OCI-LY7 (cell line): ENCODE measurements at regions of chr18 and their contacts with region 1.

Region 1: GRCh38 chr18:8747440-8747937 is 42.1 kb downstream of the MTCL1 start:
- DNase-seq: no peak
- H3K4me3 ChIP-seq: no peak overlapping the region
- H3K27ac ChIP-seq: peak overlapping the region; percentile 99
- H3K4me1 ChIP-seq: peaks cover 94% of the 10 kb centered on the region
- CTCF ChIP-seq: no peak

Region 2: GRCh38 chr18:8696749-8697211 is 50.7 kb before region 1 on chr18:
- CTCF ChIA-PET with region 1: no interaction called
- POLR2A ChIA-PET with region 1: interaction called, 3 read pairs
- intact Hi-C with region 1: loop called (anchors 2 kb)
- DNase-seq: peak; percentile 75
- H3K4me3 ChIP-seq: peak overlapping the region; percentile 28
- H3K27ac ChIP-seq: peak overlapping the region; percentile 79
- H3K4me1 ChIP-seq: peaks cover 23% of the 10 kb centered on the region
- CTCF ChIP-seq: peak; percentile 97

Region 3: DNA sequence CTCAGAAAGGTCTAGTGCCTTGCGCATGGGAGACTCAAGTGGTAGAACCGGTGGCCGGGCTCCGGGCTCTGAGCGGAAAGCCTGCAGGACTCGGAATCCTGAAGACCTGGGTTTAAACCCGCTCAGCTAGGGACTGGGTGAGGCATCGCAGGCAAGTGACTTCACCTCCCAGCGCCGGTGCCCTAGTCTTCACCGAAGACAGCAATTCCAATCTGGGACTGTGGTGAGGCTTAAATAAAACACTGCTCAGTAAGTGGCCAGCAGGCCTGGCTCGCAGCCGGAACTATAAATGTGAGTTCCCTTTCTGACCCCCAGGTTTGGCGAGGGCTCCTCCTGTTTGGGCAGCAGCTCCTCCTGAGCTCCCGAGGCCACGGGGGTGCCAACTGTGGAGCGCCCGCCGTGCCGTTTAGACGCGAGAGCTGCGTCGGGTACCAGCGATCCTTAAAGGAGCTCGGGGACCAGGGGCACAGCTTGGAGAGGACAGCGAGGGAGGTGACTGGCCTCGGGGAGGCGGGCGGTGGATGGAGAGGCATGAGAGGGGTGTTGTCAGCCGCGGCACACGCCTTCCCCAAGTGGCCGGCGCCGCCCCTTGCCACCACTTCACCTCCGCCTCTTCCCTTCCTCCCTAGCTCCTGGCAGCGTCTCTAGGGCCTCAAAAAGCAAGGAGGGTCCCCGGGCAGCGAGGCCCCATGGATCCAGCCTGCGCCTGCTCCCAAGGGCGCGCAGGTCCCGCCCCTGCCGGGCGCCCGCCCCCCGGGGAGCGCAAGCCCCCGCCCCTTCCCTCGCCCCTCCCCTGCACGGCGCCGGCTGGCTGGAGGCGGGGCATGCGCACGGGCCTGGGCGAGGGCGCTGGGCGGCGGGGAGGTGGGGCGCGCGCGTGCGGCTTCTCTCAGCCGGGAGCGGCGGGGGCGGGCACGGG is 42.9 kb before region 1 on chr18:
- CTCF ChIA-PET with region 1: interaction called, 4 read pairs
- POLR2A ChIA-PET with region 1: interaction called, 19 read pairs
- intact Hi-C with region 1: loop called (anchors 1 kb)
- DNase-seq: peak; percentile 91
- H3K4me3 ChIP-seq: peak overlapping the region; percentile 67
- H3K27ac ChIP-seq: no peak overlapping the region
- H3K4me1 ChIP-seq: peaks cover 24% of the 10 kb centered on the region
- CTCF ChIP-seq: no peak

Region 4: GRCh38 chr18:8730080-8730827 is 17.2 kb before region 1 on chr18:
- CTCF ChIA-PET with region 1: no interaction called
- POLR2A ChIA-PET with region 1: interaction called, 53 read pairs
- intact Hi-C with region 1: loop called (anchors 2 kb)
- DNase-seq: no peak
- H3K4me3 ChIP-seq: no peak overlapping the region
- H3K27ac ChIP-seq: no peak overlapping the region
- H3K4me1 ChIP-seq: peaks cover 41% of the 10 kb centered on the region
- CTCF ChIP-seq: no peak

Region 5: DNA sequence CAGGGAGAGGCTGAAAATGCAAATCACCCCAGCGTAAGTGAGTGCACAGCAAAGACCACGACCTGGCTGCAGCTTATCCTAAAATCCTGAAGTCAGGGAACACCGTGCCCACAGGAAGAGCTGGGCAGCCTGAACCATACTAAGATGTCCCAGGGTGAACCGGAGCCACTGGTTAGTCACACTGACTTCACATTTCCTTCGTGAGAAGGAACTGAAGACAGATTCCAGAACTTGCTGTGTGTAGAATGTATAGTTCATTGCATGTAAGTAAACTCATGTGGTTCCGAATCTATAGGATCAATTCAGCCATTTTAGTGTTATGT is 270.4 kb after region 1 on chr18:
- CTCF ChIA-PET with region 1: no interaction called
- POLR2A ChIA-PET with region 1: no interaction called
- intact Hi-C with region 1: no loop called
- DNase-seq: no peak
- H3K4me3 ChIP-seq: no peak overlapping the region
- H3K27ac ChIP-seq: no peak overlapping the region
- H3K4me1 ChIP-seq: peaks cover 18% of the 10 kb centered on the region
- CTCF ChIP-seq: no peak

Region 6: GRCh38 chr18:9066817-9067306 is 319.4 kb after region 1 on chr18:
- CTCF ChIA-PET with region 1: no interaction called
- POLR2A ChIA-PET with region 1: no interaction called
- intact Hi-C with region 1: loop called (anchors 10 kb)
- DNase-seq: peak; percentile 87
- H3K4me3 ChIP-seq: peak overlapping the region; percentile 30
- H3K27ac ChIP-seq: peak overlapping the region; percentile 94
- H3K4me1 ChIP-seq: peaks cover 86% of the 10 kb centered on the region
- CTCF ChIP-seq: no peak